Activated naive CD4-positive, alpha-beta T cell treated with anti-CD3 and anti-CD28 coated beads for 36 hours (primary cell): ENCODE measurements at regions of chr6 and their contacts with region 1.

Region 1: DNA sequence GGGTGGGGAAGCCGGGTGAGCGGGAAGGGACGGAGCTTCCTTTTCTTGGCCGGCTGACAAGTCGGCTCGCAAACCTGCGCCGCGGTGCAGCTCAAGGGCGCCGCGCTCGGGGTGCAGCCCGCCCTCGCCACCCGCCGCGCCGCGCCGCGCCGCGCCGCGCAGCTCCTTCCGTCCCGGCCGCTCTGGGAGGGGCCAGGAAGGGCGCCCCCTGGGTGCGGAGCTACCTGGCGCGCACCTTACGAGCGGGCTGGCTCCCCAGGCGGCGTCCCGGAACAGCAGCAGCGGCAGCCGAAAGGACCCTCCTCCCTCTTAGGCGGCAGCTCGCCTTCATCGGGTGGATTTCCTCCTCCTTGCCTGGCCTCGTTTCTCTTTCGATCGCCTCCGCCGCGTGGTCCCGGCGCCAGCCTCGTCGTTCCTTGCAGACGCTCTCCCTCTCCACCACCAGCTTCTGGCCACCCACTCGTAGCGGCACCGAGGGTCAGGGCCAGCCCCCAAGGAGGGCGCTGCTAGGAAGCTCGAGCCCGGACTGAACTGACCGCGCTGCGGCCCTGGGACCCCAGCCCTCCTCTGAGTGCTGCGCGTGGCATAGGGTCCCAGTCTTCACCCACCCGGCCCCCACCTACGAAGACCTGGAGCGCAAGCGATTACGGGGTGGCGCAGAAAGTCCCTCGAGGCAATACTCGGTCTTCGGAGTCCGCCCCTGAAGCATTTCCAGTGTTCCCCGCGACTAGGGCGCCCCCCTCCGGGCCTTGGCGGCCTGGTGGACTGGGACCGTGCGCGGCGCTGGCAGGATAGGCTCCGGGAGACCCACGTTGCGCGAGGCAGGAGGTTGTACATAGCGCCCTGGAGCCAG is at the start of gene MAP3K5:
- DNase-seq: peak; percentile 96
- H3K4me3 Mint-ChIP-seq: peak within 1 kb of the TSS; percentile 89
- H3K27ac Mint-ChIP-seq: peak within 1 kb of the TSS; percentile 86
- H3K4me1 Mint-ChIP-seq: peaks cover 33% of the 10 kb centered on the region
- H3K27me3 Mint-ChIP-seq: no peaks in the 10 kb centered on the region
- total RNA-seq, gene MAP3K5: 9.4 to 9.7 TPM

Region 2: GRCh38 chr6:136289579-136290409 is 502.8 kb before region 1 on chr6 and contains the start of gene BCLAF1:
- CTCF ChIA-PET with region 1: interaction called, 6 read pairs
- intact Hi-C with region 1: loop called (anchors 1 kb)
- DNase-seq: peak; percentile 99
- H3K4me3 Mint-ChIP-seq: peak within 1 kb of the TSS; percentile 97
- H3K27ac Mint-ChIP-seq: peak within 1 kb of the TSS; percentile 100
- H3K4me1 Mint-ChIP-seq: peaks cover 44% of the 10 kb centered on the region
- H3K27me3 Mint-ChIP-seq: no peaks in the 10 kb centered on the region
- total RNA-seq, gene BCLAF1: 108 to 117 TPM

Region 3: DNA sequence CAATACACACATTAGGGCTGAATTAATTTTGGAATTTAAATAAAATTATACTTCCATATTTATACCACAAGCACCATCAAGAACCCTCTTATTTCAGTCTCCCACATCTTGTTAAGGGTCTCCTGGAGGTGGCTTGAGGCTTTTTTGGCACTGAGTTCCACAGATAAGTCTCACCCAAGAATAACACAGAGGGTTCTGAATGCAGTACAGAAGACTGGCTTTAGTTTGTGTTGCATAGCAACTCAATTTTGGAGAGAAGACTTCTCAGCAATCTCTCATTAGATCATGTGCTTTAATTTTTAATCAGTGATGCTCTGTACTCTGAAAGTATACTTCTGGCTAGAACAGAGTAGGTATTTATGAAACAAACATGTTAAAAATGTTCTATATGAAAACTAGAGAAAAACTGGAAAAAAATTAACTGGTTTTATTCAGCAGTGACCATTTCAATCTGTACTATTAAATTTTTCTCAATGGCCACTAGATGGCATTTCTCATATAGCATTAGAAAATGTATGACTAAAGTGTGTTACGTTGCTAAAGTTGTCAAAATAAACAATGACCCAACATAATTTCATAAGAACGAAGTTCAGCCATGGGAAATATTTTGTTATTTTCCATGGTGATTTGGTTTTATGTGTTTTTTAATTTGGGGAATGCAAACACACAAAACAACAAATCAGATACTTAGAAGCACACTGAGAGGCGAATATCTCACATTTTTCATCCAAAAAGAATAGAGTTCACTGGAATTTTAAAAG is 209.7 kb before region 1 on chr6:
- CTCF ChIA-PET with region 1: interaction called, 12 read pairs
- intact Hi-C with region 1: loop called (anchors 1 kb)
- DNase-seq: no peak
- H3K4me3 Mint-ChIP-seq: no peak overlapping the region
- H3K27ac Mint-ChIP-seq: no peak overlapping the region
- H3K4me1 Mint-ChIP-seq: no peaks in the 10 kb centered on the region
- H3K27me3 Mint-ChIP-seq: no peaks in the 10 kb centered on the region

Region 4: DNA sequence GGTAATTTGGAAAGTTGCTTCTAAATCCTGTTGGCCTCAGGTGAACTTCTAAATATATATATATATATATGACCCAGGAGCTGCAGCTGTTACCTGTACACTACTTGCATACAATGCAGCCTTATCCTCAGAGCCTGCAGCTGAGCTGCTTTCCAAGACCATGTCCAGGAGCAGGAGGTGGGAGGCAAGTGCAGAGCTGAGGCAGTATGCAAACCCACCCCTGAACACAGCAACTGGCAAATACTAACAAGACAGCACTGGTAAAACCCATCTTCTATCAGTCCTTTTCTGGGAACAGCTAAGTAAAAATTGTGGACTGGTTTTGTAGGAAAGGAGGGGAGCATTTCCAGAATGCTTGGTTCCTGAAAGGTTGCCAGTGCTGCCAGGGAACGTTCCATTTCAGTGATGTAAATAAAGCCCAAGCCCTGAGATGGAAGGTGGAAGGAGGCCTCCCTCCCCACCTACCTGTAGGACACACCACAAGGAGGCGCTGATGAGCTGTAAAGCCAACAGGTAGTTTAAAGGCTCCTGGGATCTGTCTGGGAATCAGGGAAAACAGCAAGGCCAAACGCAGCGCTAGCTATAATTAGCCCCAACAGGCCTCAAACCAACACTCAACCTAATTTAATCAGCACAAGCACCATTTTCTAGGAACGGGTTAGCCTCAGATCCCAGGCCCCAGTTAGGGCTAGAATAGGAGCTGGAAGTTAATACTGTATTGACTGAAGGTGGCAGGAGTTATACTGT is 148.6 kb before region 1 on chr6:
- CTCF ChIA-PET with region 1: interaction called, 328 read pairs
- intact Hi-C with region 1: loop called (anchors 1 kb)
- DNase-seq: peak; percentile 93
- H3K4me3 Mint-ChIP-seq: no peak overlapping the region
- H3K27ac Mint-ChIP-seq: no peak overlapping the region
- H3K4me1 Mint-ChIP-seq: no peaks in the 10 kb centered on the region
- H3K27me3 Mint-ChIP-seq: no peaks in the 10 kb centered on the region

Region 5: DNA sequence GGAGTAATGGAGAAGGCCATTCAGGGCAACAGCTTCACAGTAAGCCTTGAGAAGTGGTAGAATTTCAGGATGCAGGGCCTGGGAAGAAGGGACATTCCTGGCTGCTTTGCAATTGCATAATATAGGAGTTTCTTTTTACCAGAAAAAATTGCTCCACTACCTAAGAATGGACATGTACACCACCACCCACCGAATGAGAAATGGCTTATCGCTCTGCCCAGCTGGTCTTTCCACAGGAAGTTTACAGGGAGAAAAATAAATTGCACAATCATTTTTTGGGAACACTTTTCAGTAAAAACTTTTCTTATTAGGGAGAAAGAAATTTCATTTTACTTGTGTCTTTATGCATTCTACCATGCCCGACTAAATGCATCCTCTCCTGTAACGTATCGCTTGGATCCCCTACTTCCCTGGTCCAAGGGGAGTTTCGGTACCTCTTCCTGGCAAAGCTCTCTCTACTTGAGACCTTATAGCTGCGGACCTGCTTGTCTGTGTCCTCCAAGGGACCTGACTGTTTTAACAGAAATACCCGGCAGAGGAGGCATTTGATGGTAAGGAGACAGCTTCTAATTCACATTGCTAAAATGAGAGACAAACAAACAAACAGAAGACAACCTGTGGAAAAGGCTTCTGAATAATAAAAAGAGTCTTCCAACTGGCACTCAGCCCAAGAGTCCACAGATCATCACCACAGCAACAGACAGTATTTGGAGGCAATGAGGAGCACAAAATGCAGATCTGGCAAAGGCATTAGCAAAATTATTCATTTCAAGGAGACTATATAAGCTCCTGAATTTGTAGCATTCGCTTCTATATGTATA is 54.6 kb before region 1 on chr6:
- CTCF ChIA-PET with region 1: interaction called, 31 read pairs
- intact Hi-C with region 1: no loop called
- DNase-seq: no peak
- H3K4me3 Mint-ChIP-seq: no peak overlapping the region
- H3K27ac Mint-ChIP-seq: no peak overlapping the region
- H3K4me1 Mint-ChIP-seq: peaks cover 8% of the 10 kb centered on the region
- H3K27me3 Mint-ChIP-seq: no peaks in the 10 kb centered on the region

Region 6: GRCh38 chr6:136761227-136761922 is 31.3 kb before region 1 on chr6:
- CTCF ChIA-PET with region 1: interaction called, 54 read pairs
- intact Hi-C with region 1: no loop called
- DNase-seq: no peak
- H3K4me3 Mint-ChIP-seq: peak overlapping the region; percentile 5
- H3K27ac Mint-ChIP-seq: no peak overlapping the region
- H3K4me1 Mint-ChIP-seq: peaks cover 60% of the 10 kb centered on the region
- H3K27me3 Mint-ChIP-seq: no peaks in the 10 kb centered on the region